Calu3 (cell line): ENCODE measurements at regions of chr3 and their contacts with region 1.

Region 1: DNA sequence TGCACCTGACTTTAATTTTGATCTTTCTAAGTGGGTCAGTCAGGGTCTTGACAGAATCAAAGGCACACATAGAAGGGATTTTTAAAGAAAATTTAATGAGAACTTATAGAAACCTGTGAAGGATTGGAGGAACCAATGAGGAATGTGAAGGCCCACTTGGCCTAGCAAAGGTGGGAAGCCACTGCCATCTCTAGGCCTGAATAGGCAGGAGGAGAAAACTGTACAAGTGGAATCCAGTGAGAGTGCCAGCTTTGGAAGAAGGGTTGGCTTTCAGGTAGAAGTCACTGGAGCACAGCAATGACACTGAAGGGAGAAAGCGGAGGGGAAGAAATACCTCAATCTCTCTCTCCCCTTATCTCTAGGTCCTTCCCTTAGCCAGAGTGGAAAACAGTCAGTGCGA is 380.7 kb upstream of the KCNMB2 start:
- DNase-seq: peak; percentile 16
- H3K4me3 Mint-ChIP-seq: no peak overlapping the region
- H3K27ac Mint-ChIP-seq: no peak overlapping the region
- H3K4me1 Mint-ChIP-seq: no peaks in the 10 kb centered on the region
- H3K27me3 Mint-ChIP-seq: no peaks in the 10 kb centered on the region
- CTCF ChIP-seq: no peak

Region 2: GRCh38 chr3:177633671-177634207 is 521.8 kb before region 1 on chr3:
- CTCF ChIA-PET with region 1: no interaction called
- intact Hi-C with region 1: loop called (anchors 5 kb)
- DNase-seq: peak; percentile 43
- H3K4me3 Mint-ChIP-seq: no peak overlapping the region
- H3K27ac Mint-ChIP-seq: peak overlapping the region; percentile 1
- H3K4me1 Mint-ChIP-seq: peaks cover 14% of the 10 kb centered on the region
- H3K27me3 Mint-ChIP-seq: no peaks in the 10 kb centered on the region
- CTCF ChIP-seq: no peak

Region 3: DNA sequence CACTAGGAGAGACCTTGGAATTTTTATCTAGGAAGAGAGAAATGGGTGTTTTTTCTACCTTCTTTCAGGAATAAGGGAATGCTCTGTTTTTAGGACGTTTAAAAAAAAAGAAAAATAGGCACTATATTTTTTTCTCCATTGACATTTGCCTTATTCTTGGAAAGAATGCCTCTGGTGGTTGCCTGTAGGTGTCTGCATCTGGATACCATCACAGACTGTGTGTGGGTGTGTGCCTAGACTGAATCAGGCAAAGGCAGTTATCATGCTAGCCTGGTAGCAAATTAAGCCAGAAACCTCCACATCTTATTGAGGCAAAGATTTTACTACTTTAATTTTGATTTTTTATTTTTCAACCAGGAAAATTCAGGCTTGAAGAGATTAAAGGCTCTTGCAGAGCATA is 132.9 kb before region 1 on chr3:
- CTCF ChIA-PET with region 1: no interaction called
- intact Hi-C with region 1: no loop called
- DNase-seq: no peak
- H3K4me3 Mint-ChIP-seq: no peak overlapping the region
- H3K27ac Mint-ChIP-seq: no peak overlapping the region
- H3K4me1 Mint-ChIP-seq: no peaks in the 10 kb centered on the region
- H3K27me3 Mint-ChIP-seq: no peaks in the 10 kb centered on the region
- CTCF ChIP-seq: no peak